ENCODE measurements at regions of chr3 and their contacts with region 1.

Region 1: GRCh38 chr3:110814170-110815007 is 257.2 kb upstream of the NECTIN3 start:
- DNase-seq: peak; percentile 76
- H3K4me3 Mint-ChIP-seq: no peak overlapping the region
- H3K27ac Mint-ChIP-seq: peak overlapping the region; percentile 40
- H3K4me1 Mint-ChIP-seq: peaks cover 26% of the 10 kb centered on the region
- H3K27me3 Mint-ChIP-seq: no peaks in the 10 kb centered on the region
- CTCF ChIP-seq: no peak

Region 2: GRCh38 chr3:110799271-110799670 is 15.1 kb before region 1 on chr3:
- CTCF ChIA-PET with region 1: no interaction called
- POLR2A ChIA-PET with region 1: interaction called, 18 read pairs
- intact Hi-C with region 1: no loop called
- DNase-seq: peak; percentile 77
- H3K4me3 Mint-ChIP-seq: no peak overlapping the region
- H3K27ac Mint-ChIP-seq: no peak overlapping the region
- H3K4me1 Mint-ChIP-seq: peaks cover 8% of the 10 kb centered on the region
- H3K27me3 Mint-ChIP-seq: no peaks in the 10 kb centered on the region
- CTCF ChIP-seq: no peak

Region 3: DNA sequence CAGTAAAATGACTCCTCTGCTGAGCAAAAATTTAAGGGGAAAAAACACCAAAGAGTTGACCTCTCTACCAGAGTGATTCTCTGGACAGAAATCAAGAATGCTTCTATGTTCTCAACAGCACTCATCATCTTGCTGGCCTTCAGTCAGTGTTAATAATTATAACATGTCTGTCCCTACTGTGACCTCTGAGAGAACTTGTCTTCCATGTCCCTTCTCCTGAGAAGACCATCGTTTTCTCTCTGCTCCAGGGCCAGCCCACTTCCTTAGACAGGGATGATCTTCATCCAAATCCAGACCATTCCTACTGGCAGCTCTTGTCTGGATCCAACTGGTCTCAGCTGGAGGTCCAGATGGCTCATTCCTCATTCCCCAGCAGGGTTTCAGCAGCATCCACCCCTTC is 118.2 kb after region 1 on chr3:
- CTCF ChIA-PET with region 1: no interaction called
- POLR2A ChIA-PET with region 1: no interaction called
- intact Hi-C with region 1: no loop called
- DNase-seq: no peak
- H3K4me3 Mint-ChIP-seq: no peak overlapping the region
- H3K27ac Mint-ChIP-seq: no peak overlapping the region
- H3K4me1 Mint-ChIP-seq: no peaks in the 10 kb centered on the region
- H3K27me3 Mint-ChIP-seq: no peaks in the 10 kb centered on the region
- CTCF ChIP-seq: no peak